ENCODE measurements at regions of chr6 and their contacts with region 1.

Region 1: GRCh38 chr6:134152767-134153485 is 100.5 kb upstream of the SLC2A12 start:
- DNase-seq: no peak
- ATAC-seq: peak in 3 of 4 donors; percentile 16 to 38 (median 37)
- H3K4me3 ChIP-seq: no peak overlapping the region
- H3K27ac ChIP-seq: no peak overlapping the region
- H3K4me1 ChIP-seq: no peaks in the 10 kb centered on the region
- H3K27me3 ChIP-seq: no peaks in the 10 kb centered on the region
- CTCF ChIP-seq: no peak
- POLR2A ChIP-seq: no peak

Region 2: DNA sequence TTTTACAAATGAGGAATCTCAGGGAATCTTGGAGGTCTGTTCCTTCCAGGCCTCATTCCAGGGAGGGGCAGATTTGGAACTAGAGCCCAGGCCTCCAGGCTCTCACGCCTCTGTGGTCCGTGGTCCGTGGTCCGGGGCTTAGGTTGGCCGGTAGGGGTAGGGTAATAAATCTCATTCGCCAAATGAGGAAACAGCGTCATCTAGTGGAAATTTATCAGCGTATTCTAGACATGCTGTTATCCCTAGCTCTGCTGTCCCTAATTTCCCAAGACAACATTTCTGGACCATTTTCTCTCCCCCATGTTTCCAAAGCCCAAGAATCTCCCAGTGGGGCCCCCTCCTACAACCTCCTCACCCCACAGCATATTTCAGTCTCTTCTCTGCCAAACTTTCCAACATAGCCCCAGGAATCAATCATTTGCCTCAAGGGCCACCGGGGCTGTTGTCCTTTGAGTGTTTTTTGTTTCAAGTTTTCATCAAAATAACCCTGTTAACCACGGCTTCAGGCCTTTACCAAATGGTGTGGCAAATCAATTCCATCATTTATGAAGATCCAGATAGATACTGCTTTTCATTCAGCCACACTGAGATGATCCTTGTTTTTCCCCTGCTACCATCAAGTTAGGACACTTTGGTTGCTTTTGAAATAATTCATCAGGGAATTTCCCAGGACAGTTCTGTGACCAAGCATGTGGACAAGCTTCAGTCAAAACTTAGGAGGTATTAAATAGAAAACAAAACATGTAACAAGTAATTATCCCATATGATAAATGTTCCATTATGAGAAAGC is 670.2 kb after region 1 on chr6:
- intact Hi-C with region 1: loop called in 1 of 2 experiments (anchors 10 kb)
- DNase-seq: peak in 2 of 3 donors; percentile 31 to 58
- ATAC-seq: peak; percentile 83 to 92 (median 83)
- H3K4me3 ChIP-seq: no peak overlapping the region
- H3K27ac ChIP-seq: peak overlapping the region; percentile 0 to 67 (median 16)
- H3K4me1 ChIP-seq: peaks cover 0 to 38% (median 3%) of the 10 kb centered on the region in 4 donors
- H3K27me3 ChIP-seq: no peaks in the 10 kb centered on the region
- CTCF ChIP-seq: peak; percentile 75 to 98 (median 82)
- POLR2A ChIP-seq: no peak